Naive thymus-derived CD4-positive, alpha-beta T cell (primary cell): ENCODE measurements at regions of chr1 and their contacts with region 1.

Region 1: GRCh38 chr1:186272486-186272885 is 102.6 kb downstream of the TPR start:
- DNase-seq: peak in 5 of 9 donors; percentile 36 to 55 (median 46)
- ATAC-seq: peak; percentile 50
- H3K4me3 ChIP-seq: no peak overlapping the region
- H3K4me3 Mint-ChIP-seq: no peak overlapping the region
- H3K27ac ChIP-seq: no peak overlapping the region
- H3K27ac Mint-ChIP-seq: peak overlapping the region in 2 of 9 donors; percentile 45 to 74
- H3K4me1 ChIP-seq: no peaks in the 10 kb centered on the region
- H3K4me1 Mint-ChIP-seq: peaks cover 6 to 24% (median 20%) of the 10 kb centered on the region in 7 donors
- H3K27me3 ChIP-seq: no peaks in the 10 kb centered on the region
- H3K27me3 Mint-ChIP-seq: peaks cover 0 to 11% (median 0%) of the 10 kb centered on the region in 5 donors

Region 2: DNA sequence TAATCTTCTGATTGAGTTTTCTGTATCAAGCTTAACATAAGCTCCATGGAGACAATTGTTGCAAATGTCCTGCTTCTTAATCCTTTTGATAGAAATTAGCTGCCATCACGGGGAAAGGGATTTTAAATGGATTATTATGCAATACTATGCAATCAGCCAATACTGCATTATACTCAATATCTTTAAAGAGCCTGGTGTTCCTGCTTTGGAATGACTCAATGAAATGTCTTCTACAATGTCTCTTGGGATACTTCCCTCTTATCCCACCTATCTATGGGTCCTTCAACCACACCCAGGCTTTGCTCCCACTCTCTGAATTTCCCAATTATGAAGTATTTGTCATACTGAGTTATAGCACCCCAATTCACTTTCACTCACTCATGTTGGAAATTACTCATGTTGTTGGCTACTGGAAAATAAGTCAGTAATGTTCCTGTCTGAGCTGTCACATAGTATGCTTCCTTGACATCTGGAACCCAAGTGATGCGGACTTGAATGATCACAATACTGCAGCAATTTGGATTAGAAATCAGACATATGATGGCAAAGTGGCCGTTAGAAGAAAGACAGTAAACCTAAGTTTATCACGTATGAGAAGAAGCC is 17.6 kb after region 1 on chr1:
- CTCF ChIA-PET with region 1: interaction called, 24 read pairs
- POLR2A ChIA-PET with region 1: interaction called, 4 read pairs
- intact Hi-C with region 1: loop called in 1 of 2 experiments (anchors 2 kb)
- DNase-seq: no peak
- ATAC-seq: no peak
- H3K4me3 ChIP-seq: no peak overlapping the region
- H3K4me3 Mint-ChIP-seq: peak overlapping the region in 8 of 10 donors; percentile 8 to 72 (median 51)
- H3K27ac ChIP-seq: peak overlapping the region; percentile 52
- H3K27ac Mint-ChIP-seq: peak overlapping the region; percentile 92 to 100 (median 94)
- H3K4me1 ChIP-seq: peaks cover 0 to 41% of the 10 kb centered on the region in 2 donors
- H3K4me1 Mint-ChIP-seq: peaks cover 33 to 82% (median 71%) of the 10 kb centered on the region in 7 donors
- H3K27me3 ChIP-seq: no peaks in the 10 kb centered on the region
- H3K27me3 Mint-ChIP-seq: peaks cover 0 to 3% (median 0%) of the 10 kb centered on the region in 5 donors

Region 3: GRCh38 chr1:186295980-186296379 is 23.5 kb after region 1 on chr1:
- CTCF ChIA-PET with region 1: interaction called, 24 read pairs
- POLR2A ChIA-PET with region 1: interaction called, 4 read pairs
- intact Hi-C with region 1: loop called in 1 of 2 experiments (anchors 1 kb)
- DNase-seq: no peak
- ATAC-seq: no peak
- H3K4me3 ChIP-seq: no peak within 1 kb of the TSS
- H3K4me3 Mint-ChIP-seq: peak within 1 kb of the TSS in 5 of 10 donors; percentile 5 to 40 (median 26)
- H3K27ac ChIP-seq: no peak within 1 kb of the TSS
- H3K27ac Mint-ChIP-seq: peak within 1 kb of the TSS in 7 of 9 donors; percentile 18 to 100 (median 33)
- H3K4me1 ChIP-seq: peaks cover 0 to 8% of the 10 kb centered on the region in 2 donors
- H3K4me1 Mint-ChIP-seq: peaks cover 6 to 71% (median 56%) of the 10 kb centered on the region in 7 donors
- H3K27me3 ChIP-seq: no peaks in the 10 kb centered on the region
- H3K27me3 Mint-ChIP-seq: no peaks in the 10 kb centered on the region